CD8-positive, alpha-beta memory T cell (primary cell): ENCODE measurements at regions of chr1 and their contacts with region 1.

Region 1: GRCh38 chr1:182839209-182840065 is at the start of gene DHX9:
- DNase-seq: peak; percentile 94 to 97 (median 96)
- H3K4me3 ChIP-seq: peak within 1 kb of the TSS; percentile 97
- H3K4me3 Mint-ChIP-seq: peak within 1 kb of the TSS; percentile 93 to 99 (median 96)
- H3K27ac ChIP-seq: peak within 1 kb of the TSS; percentile 86
- H3K27ac Mint-ChIP-seq: peak within 1 kb of the TSS; percentile 93 to 98 (median 97)
- H3K4me1 ChIP-seq: peaks cover 42% of the 10 kb centered on the region
- H3K4me1 Mint-ChIP-seq: peaks cover 48 to 57% (median 53%) of the 10 kb centered on the region in 3 donors
- H3K27me3 ChIP-seq: no peaks in the 10 kb centered on the region
- H3K27me3 Mint-ChIP-seq: peaks cover 0 to 7% of the 10 kb centered on the region in 2 donors
- total RNA-seq, gene DHX9: 342 to 353 TPM

Region 2: DNA sequence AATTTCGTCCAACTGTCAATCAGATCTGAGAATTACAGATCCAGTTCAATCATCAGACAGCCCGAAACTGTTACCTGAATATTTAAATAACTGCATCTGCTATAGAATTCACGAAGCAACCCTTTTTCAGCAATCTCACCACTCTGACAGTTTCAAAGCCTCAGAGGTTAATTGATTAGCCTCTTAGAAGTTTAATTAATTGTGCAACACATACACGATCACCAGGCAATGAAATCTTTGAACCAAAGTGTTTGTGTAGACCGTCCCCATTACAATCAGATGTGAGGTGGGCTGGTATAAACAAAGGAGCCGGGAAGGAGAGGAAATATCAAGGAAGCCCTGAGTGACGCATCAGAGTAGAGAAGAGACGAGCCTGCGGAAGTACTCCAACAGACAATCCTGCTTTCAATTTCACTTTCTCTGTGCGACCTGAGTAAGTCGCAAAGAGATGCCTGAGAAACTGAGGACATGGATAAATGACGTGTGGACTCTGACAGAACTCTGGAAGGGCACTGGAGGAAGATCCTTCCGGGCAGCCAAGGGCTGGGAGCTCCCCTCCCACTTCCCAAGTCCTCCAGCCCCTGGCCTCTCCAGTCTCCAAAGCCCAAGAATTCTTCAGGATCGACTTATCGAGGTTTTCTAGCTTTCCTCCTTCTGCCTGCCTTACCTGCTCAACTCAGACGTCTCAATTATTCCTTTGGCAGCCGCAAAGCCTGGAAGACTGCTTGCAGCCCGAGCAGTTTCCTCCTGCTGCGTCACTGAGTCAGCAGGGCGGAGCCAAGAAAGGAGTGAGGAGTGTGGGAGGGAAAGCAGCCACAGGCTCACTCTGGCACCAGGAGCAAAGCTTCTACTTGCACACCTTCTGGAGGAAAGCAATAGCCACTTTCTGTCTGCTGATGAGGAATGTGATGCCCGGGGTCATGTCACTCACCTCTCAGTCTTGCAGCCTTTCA is 250.7 kb before region 1 on chr1 and contains the start of gene RNASEL:
- CTCF ChIA-PET with region 1: no interaction called
- POLR2A ChIA-PET with region 1: interaction called, 10 read pairs
- DNase-seq: peak; percentile 41 to 74 (median 64)
- H3K4me3 ChIP-seq: peak within 1 kb of the TSS; percentile 90
- H3K4me3 Mint-ChIP-seq: peak within 1 kb of the TSS; percentile 92 to 99 (median 97)
- H3K27ac ChIP-seq: peak within 1 kb of the TSS; percentile 99
- H3K27ac Mint-ChIP-seq: peak within 1 kb of the TSS; percentile 98 to 100 (median 100)
- H3K4me1 ChIP-seq: peaks cover 38% of the 10 kb centered on the region
- H3K4me1 Mint-ChIP-seq: peaks cover 45 to 59% (median 55%) of the 10 kb centered on the region in 3 donors
- H3K27me3 ChIP-seq: no peaks in the 10 kb centered on the region
- H3K27me3 Mint-ChIP-seq: peaks cover 0 to 3% of the 10 kb centered on the region in 2 donors
- total RNA-seq, gene RNASEL: 5.3 to 5.6 TPM

Region 3: GRCh38 chr1:182768963-182769362 is 70.5 kb before region 1 on chr1:
- CTCF ChIA-PET with region 1: no interaction called
- POLR2A ChIA-PET with region 1: no interaction called
- DNase-seq: no peak
- H3K4me3 ChIP-seq: no peak overlapping the region
- H3K4me3 Mint-ChIP-seq: no peak overlapping the region
- H3K27ac ChIP-seq: no peak overlapping the region
- H3K27ac Mint-ChIP-seq: no peak overlapping the region
- H3K4me1 ChIP-seq: no peaks in the 10 kb centered on the region
- H3K4me1 Mint-ChIP-seq: no peaks in the 10 kb centered on the region
- H3K27me3 ChIP-seq: no peaks in the 10 kb centered on the region
- H3K27me3 Mint-ChIP-seq: peaks cover 12 to 36% of the 10 kb centered on the region in 2 donors

Region 4: DNA sequence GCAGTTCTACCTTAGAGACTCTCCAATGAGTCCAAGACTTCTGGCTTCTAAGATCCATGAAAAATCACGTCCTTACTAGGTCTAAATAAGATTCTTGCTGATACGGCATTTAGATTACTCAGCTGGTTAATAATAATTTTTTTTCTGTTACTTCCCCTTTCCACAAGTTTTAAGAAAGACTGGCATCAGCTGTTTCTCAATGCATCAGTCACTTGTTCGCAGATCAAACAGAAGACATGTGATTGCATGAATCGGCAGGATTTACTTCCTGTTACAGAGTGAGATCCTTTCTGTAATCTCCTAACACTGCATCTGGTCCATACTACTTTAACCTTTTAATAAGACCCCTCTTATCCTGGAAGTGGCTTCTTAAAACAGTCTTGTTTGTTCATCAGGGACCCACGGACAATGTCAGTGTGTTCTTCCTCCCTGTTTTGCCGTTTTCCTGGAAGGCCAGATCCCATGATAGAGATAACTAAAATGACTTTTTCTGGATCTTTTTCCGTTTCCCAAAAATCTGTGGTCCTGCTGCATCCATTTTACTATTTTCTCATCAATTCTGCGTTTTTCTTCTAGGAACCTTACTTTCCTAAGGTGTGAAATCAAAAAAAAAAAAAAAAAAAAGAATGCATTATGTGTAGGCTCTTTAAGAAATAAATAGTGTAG is 43.7 kb before region 1 on chr1:
- CTCF ChIA-PET with region 1: interaction called, 3 read pairs
- POLR2A ChIA-PET with region 1: interaction called, 10 read pairs
- DNase-seq: no peak
- H3K4me3 ChIP-seq: no peak overlapping the region
- H3K4me3 Mint-ChIP-seq: no peak overlapping the region
- H3K27ac ChIP-seq: no peak overlapping the region
- H3K27ac Mint-ChIP-seq: no peak overlapping the region
- H3K4me1 ChIP-seq: no peaks in the 10 kb centered on the region
- H3K4me1 Mint-ChIP-seq: peaks cover 0 to 6% (median 0%) of the 10 kb centered on the region in 3 donors
- H3K27me3 ChIP-seq: no peaks in the 10 kb centered on the region
- H3K27me3 Mint-ChIP-seq: peaks cover 0 to 2% of the 10 kb centered on the region in 2 donors